PC-9 (cell line): ENCODE measurements at regions of chr18 and their contacts with region 1.

Region 1: GRCh38 chr18:58180738-58181353 is 136.8 kb downstream of the NEDD4L start:
- DNase-seq: peak; percentile 43 to 52
- H3K4me3 ChIP-seq: no peak overlapping the region
- H3K27ac ChIP-seq: no peak overlapping the region
- H3K4me1 ChIP-seq: peaks cover 60% of the 10 kb centered on the region
- H3K27me3 ChIP-seq: no peaks in the 10 kb centered on the region
- CTCF ChIP-seq: peak; percentile 94

Region 2: DNA sequence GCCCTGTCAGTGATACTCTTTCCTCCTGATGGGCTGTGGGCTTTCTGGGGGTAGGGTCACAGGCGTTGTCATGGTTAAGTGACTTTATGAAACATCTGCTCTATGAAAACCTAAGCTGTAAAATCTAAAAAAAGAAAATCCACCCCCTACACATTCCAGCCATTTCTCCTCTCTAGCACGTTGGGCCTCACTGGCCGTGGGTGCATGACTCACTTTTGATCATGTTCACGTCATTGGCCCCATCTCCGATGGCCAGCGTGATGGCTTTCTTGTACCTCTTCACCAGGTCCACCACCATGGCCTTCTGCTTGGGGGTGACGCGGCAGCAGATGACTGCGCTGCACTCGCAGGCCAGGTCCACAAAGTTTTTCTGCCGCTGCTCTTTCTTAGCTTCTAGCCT is 519.9 kb before region 1 on chr18:
- CTCF ChIA-PET with region 1: interaction called, 10 read pairs
- POLR2A ChIA-PET with region 1: no interaction called
- intact Hi-C with region 1: no loop called
- DNase-seq: no peak
- H3K4me3 ChIP-seq: no peak overlapping the region
- H3K27ac ChIP-seq: no peak overlapping the region
- H3K4me1 ChIP-seq: no peaks in the 10 kb centered on the region
- H3K27me3 ChIP-seq: no peaks in the 10 kb centered on the region
- CTCF ChIP-seq: no peak

Region 3: GRCh38 chr18:58015065-58015780 is 165.6 kb before region 1 on chr18:
- CTCF ChIA-PET with region 1: no interaction called
- POLR2A ChIA-PET with region 1: no interaction called
- intact Hi-C with region 1: no loop called
- DNase-seq: no peak
- H3K4me3 ChIP-seq: no peak overlapping the region
- H3K27ac ChIP-seq: no peak overlapping the region
- H3K4me1 ChIP-seq: peaks cover 33% of the 10 kb centered on the region
- H3K27me3 ChIP-seq: no peaks in the 10 kb centered on the region
- CTCF ChIP-seq: no peak

Region 4: DNA sequence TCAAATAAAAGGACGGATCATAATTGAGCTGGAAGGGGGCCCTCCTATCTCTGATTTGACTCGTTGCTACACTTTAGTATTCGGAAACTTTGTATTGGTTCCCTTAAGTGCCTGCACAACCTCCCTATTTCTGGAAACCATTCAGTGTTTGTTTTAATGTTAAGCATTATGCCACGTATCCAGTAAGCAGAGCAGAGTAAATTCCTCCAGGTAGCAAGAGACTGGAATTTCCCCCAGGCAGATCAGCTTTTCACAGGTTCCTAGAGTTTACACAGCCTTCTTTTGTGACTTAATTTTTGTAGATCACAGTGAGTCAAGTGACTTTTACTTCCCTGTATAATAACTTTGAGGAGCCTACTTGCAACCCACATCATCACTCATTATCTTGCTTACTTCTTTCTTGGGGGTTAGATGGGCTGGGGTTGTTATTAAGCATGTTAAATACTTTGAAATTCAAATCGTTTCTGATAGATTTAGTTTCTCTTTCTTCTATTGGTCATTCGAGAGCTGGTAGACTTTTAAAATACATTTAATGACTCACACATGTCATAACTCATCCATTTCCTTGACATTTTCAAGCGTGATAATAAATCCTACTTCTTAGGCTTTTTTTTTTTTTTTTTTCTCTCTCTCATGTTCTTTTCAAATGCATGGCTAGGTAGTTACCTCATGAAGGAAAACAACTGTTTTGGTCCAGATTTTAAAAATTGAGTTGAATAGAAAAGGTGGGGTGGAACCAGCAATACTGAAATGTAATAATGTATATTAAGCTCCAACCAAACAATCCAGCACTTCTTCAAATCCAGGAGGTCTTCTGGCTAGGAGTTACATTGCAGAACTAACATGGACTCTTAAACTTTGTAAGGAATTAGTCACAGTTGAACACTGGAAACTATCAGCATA is 82.5 kb after region 1 on chr18:
- CTCF ChIA-PET with region 1: no interaction called
- POLR2A ChIA-PET with region 1: no interaction called
- intact Hi-C with region 1: loop called (anchors 10 kb)
- DNase-seq: peak; percentile 31 to 95
- H3K4me3 ChIP-seq: peak overlapping the region; percentile 33
- H3K27ac ChIP-seq: peak overlapping the region; percentile 94
- H3K4me1 ChIP-seq: peaks cover 81% of the 10 kb centered on the region
- H3K27me3 ChIP-seq: no peaks in the 10 kb centered on the region
- CTCF ChIP-seq: no peak